Heart right ventricle (tissue), 16 donors: ENCODE measurements at regions of chr14 and their contacts with region 1.

Region 1: DNA sequence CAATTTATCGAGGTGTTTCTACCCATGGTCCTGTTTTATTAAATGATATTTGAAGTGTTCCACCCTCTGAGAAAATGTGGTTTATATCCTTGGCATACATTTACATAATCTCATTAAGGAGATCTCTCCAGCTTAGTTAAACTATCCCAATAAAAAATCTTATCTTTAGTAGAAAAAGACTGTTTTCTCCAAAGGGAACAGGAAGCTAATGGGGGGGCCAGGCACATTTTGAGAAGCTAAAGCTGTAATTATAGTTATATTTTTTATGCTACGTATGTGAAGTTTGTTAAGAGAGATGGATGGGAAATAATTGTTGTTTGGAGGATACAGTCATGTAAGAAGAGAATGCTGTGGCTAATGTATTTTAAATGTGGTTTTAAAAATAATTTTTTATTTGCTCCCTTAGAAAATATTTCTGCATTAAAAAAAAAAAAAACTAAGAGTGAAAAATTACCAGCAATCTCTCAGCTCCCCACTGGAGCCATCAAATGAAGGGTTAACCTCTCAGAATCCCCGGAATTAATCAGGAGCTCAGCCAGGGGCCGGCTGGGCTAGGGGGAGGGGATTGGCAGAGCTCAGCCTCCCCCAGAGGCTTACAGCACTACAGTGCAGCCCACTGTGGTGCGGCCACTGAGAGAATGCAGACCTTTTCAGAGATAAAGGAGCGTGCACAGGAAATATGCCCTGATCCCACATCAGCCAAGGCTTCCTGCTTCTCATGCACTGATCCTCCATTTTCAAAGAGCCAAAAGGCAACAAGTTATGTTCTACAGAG is 185.8 kb downstream of the EGLN3 start:
- DNase-seq: peak; percentile 17 to 33
- ATAC-seq: peak in 6 of 8 donors; percentile 39 to 73 (median 67)
- H3K4me3 ChIP-seq: no peak overlapping the region
- H3K27ac ChIP-seq: no peak overlapping the region
- H3K4me1 ChIP-seq: peaks cover 0 to 48% (median 24%) of the 10 kb centered on the region in 9 donors
- H3K27me3 ChIP-seq: no peaks in the 10 kb centered on the region
- CTCF ChIP-seq: no peak

Region 2: GRCh38 chr14:33676135-33676566 is 88.9 kb before region 1 on chr14:
- intact Hi-C with region 1: loop called in 1 of 10 experiments (anchors 5 kb)
- DNase-seq: peak; percentile 24 to 40
- ATAC-seq: peak; percentile 38 to 86 (median 66)
- H3K4me3 ChIP-seq: peak overlapping the region in 8 of 10 donors; percentile 8 to 42 (median 28)
- H3K27ac ChIP-seq: peak overlapping the region in 1 of 10 donors; percentile 3
- H3K4me1 ChIP-seq: no peaks in the 10 kb centered on the region
- H3K27me3 ChIP-seq: no peaks in the 10 kb centered on the region
- CTCF ChIP-seq: peak in 8 of 9 donors; percentile 21 to 59 (median 42)

Region 3: GRCh38 chr14:33717866-33718265 is 47.2 kb before region 1 on chr14:
- intact Hi-C with region 1: no loop called
- DNase-seq: no peak
- ATAC-seq: no peak
- H3K4me3 ChIP-seq: no peak overlapping the region
- H3K27ac ChIP-seq: no peak overlapping the region
- H3K4me1 ChIP-seq: no peaks in the 10 kb centered on the region
- H3K27me3 ChIP-seq: no peaks in the 10 kb centered on the region
- CTCF ChIP-seq: no peak

Region 4: GRCh38 chr14:35725930-35726329 is 1960.9 kb after region 1 on chr14:
- intact Hi-C with region 1: no loop called
- DNase-seq: no peak
- ATAC-seq: no peak
- H3K4me3 ChIP-seq: no peak overlapping the region
- H3K27ac ChIP-seq: no peak overlapping the region
- H3K4me1 ChIP-seq: no peaks in the 10 kb centered on the region
- H3K27me3 ChIP-seq: no peaks in the 10 kb centered on the region
- CTCF ChIP-seq: no peak